ENCODE measurements at regions of chr6 and their contacts with region 1.

Region 1: GRCh38 chr6:145147981-145148783 is 587.1 kb downstream of the EPM2A start:
- DNase-seq: peak in 4 of 5 donors; percentile 13 to 54 (median 26)
- ATAC-seq: peak; percentile 77 to 97 (median 90)
- H3K4me3 ChIP-seq: no peak overlapping the region
- H3K27ac ChIP-seq: peak overlapping the region in 5 of 12 donors; percentile 14 to 47 (median 35)
- H3K4me1 ChIP-seq: peaks cover 0 to 19% (median 0%) of the 10 kb centered on the region in 12 donors
- H3K27me3 ChIP-seq: no peaks in the 10 kb centered on the region
- CTCF ChIP-seq: no peak
- POLR2A ChIP-seq: no peak

Region 2: DNA sequence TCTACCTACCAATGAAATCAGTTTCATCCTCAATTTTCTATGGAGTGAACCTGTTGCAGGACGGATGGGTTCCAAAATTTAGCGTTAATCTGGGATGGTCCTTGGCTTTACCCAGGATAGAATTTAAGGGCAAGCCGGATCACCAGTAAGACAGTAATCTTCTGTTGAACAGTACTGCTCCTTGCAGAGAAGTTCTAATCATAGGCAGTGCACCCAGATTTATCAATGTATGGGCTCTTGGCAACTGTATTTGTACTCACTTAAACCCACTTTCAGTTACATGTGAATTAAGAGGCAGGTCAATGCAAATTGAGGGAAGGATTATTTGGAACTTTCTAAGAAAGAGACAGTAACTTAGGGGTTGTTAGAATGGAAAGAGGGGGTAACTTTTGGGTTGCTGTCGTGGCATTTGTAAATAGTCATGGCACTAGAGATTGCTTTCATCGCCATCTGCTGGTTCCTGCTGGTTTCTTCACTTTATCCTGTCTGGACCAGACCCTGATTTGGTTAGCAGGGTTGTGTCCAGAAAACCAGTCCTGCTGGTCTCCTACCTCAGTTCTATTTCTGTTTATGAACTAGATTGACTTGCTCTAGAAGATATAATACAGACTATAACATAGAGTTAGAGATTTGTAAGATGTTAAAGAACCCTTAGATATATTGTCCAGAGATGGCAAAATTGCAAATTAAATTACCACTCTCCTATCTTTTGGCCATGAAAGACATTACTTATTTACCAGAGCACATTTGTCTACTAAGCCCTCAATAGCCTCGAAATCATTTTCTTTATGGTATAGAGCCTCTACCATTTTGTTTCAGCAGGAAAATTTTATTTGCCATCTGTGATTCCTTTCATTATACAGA is 216.8 kb before region 1 on chr6:
- intact Hi-C with region 1: no loop called
- DNase-seq: peak in 1 of 5 donors; percentile 8
- ATAC-seq: no peak
- H3K4me3 ChIP-seq: no peak overlapping the region
- H3K27ac ChIP-seq: no peak overlapping the region
- H3K4me1 ChIP-seq: no peaks in the 10 kb centered on the region
- H3K27me3 ChIP-seq: no peaks in the 10 kb centered on the region
- CTCF ChIP-seq: peak in 11 of 12 donors; percentile 30 to 65 (median 47)
- POLR2A ChIP-seq: no peak

Region 3: GRCh38 chr6:145044641-145045246 is 103.4 kb before region 1 on chr6:
- intact Hi-C with region 1: loop called in 1 of 10 experiments (anchors 10 kb)
- DNase-seq: no peak
- ATAC-seq: peak; percentile 71 to 92 (median 83)
- H3K4me3 ChIP-seq: no peak overlapping the region
- H3K27ac ChIP-seq: peak overlapping the region in 7 of 12 donors; percentile 11 to 59 (median 33)
- H3K4me1 ChIP-seq: peaks cover 0 to 22% (median 6%) of the 10 kb centered on the region in 12 donors
- H3K27me3 ChIP-seq: no peaks in the 10 kb centered on the region
- CTCF ChIP-seq: no peak
- POLR2A ChIP-seq: no peak